RWPE1 (cell line): ENCODE measurements at regions of chr20 and their contacts with region 1.

Region 1: DNA sequence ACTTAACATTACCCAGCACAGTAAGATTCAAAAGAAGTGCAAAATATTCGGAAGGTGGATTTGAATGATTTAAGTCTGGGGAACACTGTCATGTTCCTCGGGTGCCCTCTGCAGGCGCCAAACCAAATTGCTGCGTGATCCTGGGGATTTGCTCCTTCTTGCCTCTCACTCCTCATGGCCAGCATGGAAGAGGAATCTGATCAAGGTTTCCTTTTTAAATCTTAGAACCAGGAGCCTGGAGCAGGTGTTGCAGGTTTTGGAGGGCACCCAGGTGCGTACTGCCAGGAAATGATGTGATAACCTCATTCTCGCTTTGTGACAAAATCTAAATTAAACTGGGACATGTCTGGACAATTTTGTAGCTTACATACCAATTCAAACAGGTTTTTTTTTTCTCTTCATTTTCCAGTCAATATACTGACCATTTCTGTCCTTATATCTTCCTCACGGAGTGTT is 8.1 kb upstream of the PFDN4 start:
- DNase-seq: peak; percentile 84
- H3K27ac ChIP-seq: no peak overlapping the region
- CTCF ChIP-seq: peak; percentile 100

Region 2: GRCh38 chr20:53399592-53400259 is 800.0 kb before region 1 on chr20:
- CTCF ChIA-PET with region 1: no interaction called
- POLR2A ChIA-PET with region 1: no interaction called
- DNase-seq: no peak
- H3K27ac ChIP-seq: no peak overlapping the region
- CTCF ChIP-seq: no peak

Region 3: GRCh38 chr20:54048481-54048880 is 151.3 kb before region 1 on chr20:
- CTCF ChIA-PET with region 1: no interaction called
- POLR2A ChIA-PET with region 1: no interaction called
- DNase-seq: no peak
- H3K27ac ChIP-seq: no peak overlapping the region
- CTCF ChIP-seq: no peak

Region 4: DNA sequence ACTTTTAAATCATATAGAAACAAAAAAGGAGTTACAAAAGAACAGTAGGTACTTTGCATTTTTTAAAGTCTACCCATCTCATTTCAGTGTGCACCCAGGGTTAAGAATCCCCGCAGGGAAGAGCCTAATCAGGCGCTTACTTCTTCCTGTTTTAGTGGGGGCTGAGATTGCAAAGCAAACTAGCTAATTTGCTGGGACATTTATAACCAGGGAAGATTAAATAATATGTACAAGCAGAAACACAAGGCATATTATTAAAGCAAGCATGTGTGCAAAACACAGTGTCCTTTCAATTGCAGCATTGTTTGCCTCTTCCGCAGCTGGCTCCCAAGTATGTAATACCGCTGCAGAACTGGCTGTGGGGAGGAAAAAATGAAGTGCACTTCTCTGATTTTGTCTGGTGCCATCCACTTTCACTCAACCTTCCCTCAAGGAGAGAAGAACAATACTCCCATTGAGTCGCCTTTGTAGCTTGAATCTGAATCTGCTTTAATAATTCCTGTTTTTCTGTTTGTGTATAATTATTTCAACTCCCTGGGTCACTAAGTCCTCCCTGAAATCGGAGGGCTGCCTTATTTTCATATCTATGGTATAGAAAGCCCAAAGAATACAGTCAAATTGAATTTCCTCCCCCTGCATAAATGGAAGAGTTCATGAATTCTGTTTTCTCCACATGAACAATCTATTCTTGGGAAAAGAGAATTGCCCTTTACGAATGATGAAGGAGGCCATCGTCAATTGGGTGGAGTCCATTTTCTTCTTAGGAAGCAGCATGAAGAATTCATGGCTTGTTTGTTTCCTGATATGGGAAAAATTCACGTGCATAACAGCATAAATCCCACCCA is 106.1 kb before region 1 on chr20:
- CTCF ChIA-PET with region 1: interaction called, 126 read pairs
- POLR2A ChIA-PET with region 1: no interaction called
- DNase-seq: no peak
- H3K27ac ChIP-seq: no peak overlapping the region
- CTCF ChIP-seq: no peak

Region 5: DNA sequence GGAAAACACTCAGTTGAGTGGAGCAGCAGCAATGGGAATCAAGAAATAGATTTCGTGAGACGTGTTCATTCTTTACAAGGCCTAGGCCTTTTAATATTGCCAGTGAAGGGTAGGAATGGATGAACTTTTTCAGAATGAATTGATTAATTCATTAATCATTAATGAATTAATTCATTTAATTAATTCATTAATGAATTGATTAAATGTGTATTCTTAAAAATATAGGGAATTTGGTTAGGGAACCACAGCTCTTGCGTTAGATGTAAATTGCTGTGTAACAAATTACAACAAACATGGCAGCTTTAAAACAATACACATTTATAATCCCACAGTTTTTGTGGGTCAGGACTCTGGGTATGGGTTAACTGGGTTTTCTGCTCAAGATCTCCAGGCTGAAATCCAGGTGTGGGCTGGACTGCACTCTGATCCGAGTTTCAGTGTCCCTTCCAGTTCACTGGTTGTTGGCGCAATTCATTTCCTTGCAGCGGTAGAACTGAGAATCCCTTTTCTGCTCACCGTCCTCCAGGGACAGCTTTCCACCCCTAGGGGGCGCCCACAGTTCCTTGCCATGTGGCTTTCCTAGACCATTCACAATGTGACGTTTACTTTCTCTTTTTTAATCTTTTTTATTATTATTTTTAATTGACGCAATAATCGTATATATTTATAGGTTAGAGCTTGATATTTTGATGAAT is 96.5 kb before region 1 on chr20:
- CTCF ChIA-PET with region 1: interaction called, 126 read pairs
- POLR2A ChIA-PET with region 1: no interaction called
- DNase-seq: peak; percentile 52
- H3K27ac ChIP-seq: no peak overlapping the region
- CTCF ChIP-seq: no peak; the same call in none of the 2 replicates